Motor neuron (in vitro differentiated cells): ENCODE measurements at regions of chr3 and their contacts with region 1.

Region 1: DNA sequence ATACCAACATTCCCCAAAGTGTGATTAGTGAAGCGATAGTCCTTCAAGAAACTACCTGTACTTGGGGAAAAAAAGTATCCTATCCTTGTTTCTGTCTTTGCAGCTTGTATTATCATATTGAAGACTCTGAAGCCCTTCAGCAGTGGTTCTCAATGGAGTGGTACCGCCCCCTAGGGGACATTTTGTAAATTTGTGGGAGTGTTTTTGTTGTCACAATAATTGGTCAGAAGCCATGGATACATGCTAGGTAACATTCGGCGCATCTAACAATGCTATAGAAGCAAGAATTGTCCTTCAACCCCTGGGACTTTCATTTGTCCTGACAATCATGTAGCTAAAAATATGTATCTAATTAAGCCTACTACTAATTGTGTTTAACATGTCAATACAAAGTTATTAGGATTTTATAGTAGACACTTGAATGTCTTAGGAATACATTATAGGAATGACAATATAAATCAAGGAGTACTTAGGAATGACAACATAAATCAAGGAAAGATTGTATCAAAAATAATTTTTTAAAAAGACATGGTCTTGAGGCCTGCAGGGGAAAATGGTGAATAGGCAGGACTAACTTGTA is 53.7 kb downstream of the NMD3 start:
- ATAC-seq: peak in 4 of 8 experiments; percentile 38 to 74 (median 50)
- H3K4me3 ChIP-seq: no peak overlapping the region
- H3K27ac ChIP-seq: no peak overlapping the region
- H3K4me1 ChIP-seq: no peaks in the 10 kb centered on the region

Region 2: DNA sequence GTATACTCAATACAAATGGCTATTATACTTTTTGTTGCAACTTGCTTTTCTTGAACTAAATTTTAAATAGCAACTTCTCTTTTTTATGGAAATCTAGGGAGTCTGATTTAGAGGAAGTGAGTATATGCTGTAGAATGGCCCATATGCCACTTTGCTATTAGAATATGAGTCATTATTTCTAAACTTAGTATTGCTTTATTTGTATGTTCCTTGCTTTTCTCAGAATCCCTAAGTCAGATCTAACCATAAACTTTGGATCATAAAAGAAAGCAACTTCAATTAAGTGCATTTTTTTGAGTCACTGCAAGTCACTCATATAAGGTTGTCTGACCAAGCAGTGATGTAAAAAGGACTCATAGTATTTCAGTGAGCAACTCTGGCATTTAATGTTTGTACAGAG is 114.0 kb after region 1 on chr3:
- in situ Hi-C with region 1: loop called in 2 of 9 experiments (anchors 25 kb)
- ATAC-seq: peak in 1 of 8 experiments; percentile 55
- H3K4me3 ChIP-seq: no peak overlapping the region
- H3K27ac ChIP-seq: no peak overlapping the region
- H3K4me1 ChIP-seq: peaks cover 4 to 15% of the 10 kb centered on the region in 2 donors

Region 3: DNA sequence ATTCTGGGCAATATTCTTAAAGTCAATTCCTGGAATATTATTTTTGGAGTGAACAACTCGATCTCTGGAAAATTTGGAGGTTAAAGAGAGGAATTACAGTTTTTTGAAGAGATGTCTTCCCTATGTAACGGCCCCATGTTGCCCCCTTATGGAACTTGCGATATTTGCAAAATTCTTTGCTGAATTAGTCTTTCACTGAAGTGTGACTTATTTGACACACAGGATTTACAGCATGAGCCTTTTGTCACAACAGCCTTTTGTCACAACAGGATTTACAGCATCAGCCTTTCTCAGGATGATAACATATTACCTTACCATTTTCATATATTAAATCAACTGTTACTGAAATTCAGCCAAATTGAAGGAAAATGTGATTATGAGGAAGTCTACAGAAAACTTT is 134.3 kb after region 1 on chr3:
- in situ Hi-C with region 1: loop called in 2 of 9 experiments (anchors 10 to 25 kb)
- ATAC-seq: peak in 3 of 8 experiments; percentile 30 to 65 (median 53)
- H3K4me3 ChIP-seq: no peak overlapping the region
- H3K27ac ChIP-seq: no peak overlapping the region
- H3K4me1 ChIP-seq: no peaks in the 10 kb centered on the region

Region 4: DNA sequence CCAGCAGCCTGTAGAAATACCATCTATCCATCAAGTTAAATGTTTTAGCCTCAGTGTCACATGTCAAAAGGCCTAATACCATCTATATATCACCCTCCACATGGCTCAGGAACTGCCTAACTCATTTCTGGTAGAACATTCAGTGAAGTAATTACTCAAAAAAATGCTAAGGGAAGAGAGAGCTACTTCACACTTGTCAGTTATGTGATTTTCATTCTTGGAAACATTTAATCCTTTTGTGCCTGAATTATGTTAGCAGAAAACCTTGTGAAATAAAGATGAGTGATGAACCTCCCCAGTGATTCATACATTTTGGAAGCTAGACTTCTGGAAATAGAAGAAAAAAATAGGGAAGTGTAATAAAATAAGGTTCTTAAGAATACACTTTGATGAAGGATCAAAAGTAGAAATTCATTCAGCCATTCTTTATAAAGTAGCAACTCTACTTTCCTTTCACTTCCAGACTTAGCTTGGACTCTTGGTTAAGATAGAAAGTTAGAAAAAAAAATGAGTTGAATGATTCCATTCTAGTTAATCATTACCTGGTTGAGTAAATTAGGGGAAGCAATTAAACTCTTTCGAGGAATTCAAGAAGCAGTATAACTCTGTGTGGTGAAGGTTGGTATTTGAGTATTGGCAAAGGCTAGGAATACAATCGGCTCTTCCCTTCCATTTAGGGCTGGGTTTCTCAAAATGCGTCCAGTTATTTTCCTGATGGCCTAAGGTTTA is 225.4 kb after region 1 on chr3:
- in situ Hi-C with region 1: no loop called
- ATAC-seq: peak in 4 of 8 experiments; percentile 49 to 96 (median 92)
- H3K4me3 ChIP-seq: no peak overlapping the region
- H3K27ac ChIP-seq: no peak overlapping the region
- H3K4me1 ChIP-seq: peaks cover 6 to 12% of the 10 kb centered on the region in 2 donors